ENCODE measurements at regions of chr1 and their contacts with region 1.

Region 1: GRCh38 chr1:245045087-245045881 is 109.5 kb upstream of the KIF26B start:
- DNase-seq: no peak
- ATAC-seq: peak; percentile 21; the same call in 2 of the 3 replicates
- H3K4me3 ChIP-seq: no peak overlapping the region
- H3K27ac ChIP-seq: no peak overlapping the region
- H3K4me1 ChIP-seq: no peaks in the 10 kb centered on the region
- H3K27me3 ChIP-seq: peaks cover 0 to 1% of the 10 kb centered on the region in 2 experiments; a peak in 1 of 4 replicates
- CTCF ChIP-seq: no peak
- EP300 ChIP-seq: no peak
- POLR2A ChIP-seq: no peak
- RAD21 ChIP-seq: no peak

Region 2: GRCh38 chr1:244599937-244600350 is 445.3 kb before region 1 on chr1:
- CTCF ChIA-PET with region 1: interaction called, 78 read pairs
- POLR2A ChIA-PET with region 1: no interaction called
- RAD21 ChIA-PET with region 1: interaction called, 37 read pairs
- SMC1A ChIA-PET with region 1: interaction called, 40 read pairs
- in situ Hi-C with region 1: loop called (anchors 5 kb)
- intact Hi-C with region 1: loop called (anchors 2 kb)
- DNase-seq: peak; percentile 40
- ATAC-seq: peak; percentile 94
- H3K4me3 ChIP-seq: no peak overlapping the region
- H3K27ac ChIP-seq: no peak overlapping the region
- H3K4me1 ChIP-seq: peaks cover 4% of the 10 kb centered on the region
- H3K27me3 ChIP-seq: peaks cover 2% of the 10 kb centered on the region in 2 experiments; a peak in 2 of 4 replicates
- CTCF ChIP-seq: no peak
- EP300 ChIP-seq: peak; percentile 60 to 61
- POLR2A ChIP-seq: no peak
- RAD21 ChIP-seq: no peak

Region 3: DNA sequence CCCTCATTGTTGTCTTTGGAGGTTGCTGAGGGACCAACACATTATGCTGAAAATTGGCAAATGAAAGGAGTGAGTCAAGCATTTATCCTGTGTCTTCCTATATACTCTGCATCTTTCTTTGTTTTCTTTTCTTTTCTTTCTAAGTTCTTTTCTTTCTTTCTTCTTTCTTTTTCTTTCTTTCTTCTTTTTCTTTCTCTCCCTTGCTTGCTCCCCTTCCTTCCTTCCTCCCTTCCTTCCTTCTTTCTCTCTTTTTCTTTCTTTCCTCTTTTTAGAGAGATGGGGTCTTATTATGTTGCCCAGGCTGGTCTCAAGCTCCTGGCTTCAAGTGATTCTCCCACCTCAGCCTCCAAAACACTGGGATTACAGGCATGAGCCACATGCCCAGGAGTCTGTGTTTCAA is 238.1 kb before region 1 on chr1:
- CTCF ChIA-PET with region 1: interaction called, 239 read pairs
- POLR2A ChIA-PET with region 1: no interaction called
- RAD21 ChIA-PET with region 1: interaction called, 109 read pairs
- SMC1A ChIA-PET with region 1: interaction called, 91 read pairs
- in situ Hi-C with region 1: loop called (anchors 5 kb)
- intact Hi-C with region 1: no loop called
- DNase-seq: no peak
- ATAC-seq: no peak
- H3K4me3 ChIP-seq: no peak overlapping the region
- H3K27ac ChIP-seq: no peak overlapping the region
- H3K4me1 ChIP-seq: no peaks in the 10 kb centered on the region
- H3K27me3 ChIP-seq: no peaks in the 10 kb centered on the region
- CTCF ChIP-seq: no peak
- EP300 ChIP-seq: no peak
- POLR2A ChIP-seq: no peak
- RAD21 ChIP-seq: no peak

Region 4: GRCh38 chr1:244843148-244843978 is 201.9 kb before region 1 on chr1:
- CTCF ChIA-PET with region 1: interaction called, 13 read pairs
- POLR2A ChIA-PET with region 1: no interaction called
- RAD21 ChIA-PET with region 1: interaction called, 7 read pairs
- SMC1A ChIA-PET with region 1: interaction called, 15 read pairs
- in situ Hi-C with region 1: no loop called
- intact Hi-C with region 1: no loop called
- DNase-seq: no peak
- ATAC-seq: no peak
- H3K4me3 ChIP-seq: no peak overlapping the region
- H3K27ac ChIP-seq: no peak overlapping the region
- H3K4me1 ChIP-seq: no peaks in the 10 kb centered on the region
- H3K27me3 ChIP-seq: no peaks in the 10 kb centered on the region
- CTCF ChIP-seq: no peak
- EP300 ChIP-seq: no peak
- POLR2A ChIP-seq: no peak
- RAD21 ChIP-seq: no peak

Region 5: DNA sequence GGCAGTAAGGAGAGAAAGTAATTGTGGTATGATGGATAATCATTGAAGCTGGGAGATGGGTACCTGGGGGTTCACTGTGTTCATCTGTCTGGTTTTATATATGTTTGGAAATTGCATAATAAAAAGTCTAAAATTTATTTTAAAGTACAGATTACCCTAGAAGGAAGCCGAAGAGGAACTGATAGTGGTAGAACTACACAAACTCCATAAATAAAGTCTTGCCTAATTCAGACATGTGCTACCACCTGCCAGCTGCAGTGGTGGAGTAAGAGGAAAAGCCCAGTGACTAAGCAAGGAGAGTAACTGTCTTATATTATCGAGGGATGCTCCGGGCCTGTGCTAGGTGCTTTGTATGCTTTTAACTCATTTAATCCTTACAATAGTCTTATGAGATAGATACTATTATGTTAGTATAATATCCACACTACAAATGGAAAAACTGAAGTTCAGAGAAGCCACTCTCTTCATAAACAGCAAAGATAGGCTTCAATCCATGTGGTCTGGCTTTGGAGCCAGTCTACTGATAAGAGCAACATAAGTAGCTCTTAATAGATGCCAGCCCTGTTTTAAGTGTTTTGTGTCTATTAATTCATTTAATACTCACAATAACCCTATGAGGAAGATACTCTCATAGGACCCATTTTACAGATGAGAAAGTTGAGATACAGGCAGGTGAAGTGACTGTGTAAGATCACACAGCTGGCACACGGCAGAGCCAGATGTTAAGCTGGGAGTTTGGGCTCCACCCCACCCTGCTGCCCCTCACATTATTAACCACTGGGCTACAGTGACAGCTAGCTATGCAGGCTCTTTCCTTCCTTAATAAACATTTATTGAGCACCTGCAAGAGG is 124.1 kb before region 1 on chr1:
- CTCF ChIA-PET with region 1: interaction called, 10 read pairs
- POLR2A ChIA-PET with region 1: no interaction called
- RAD21 ChIA-PET with region 1: interaction called, 8 read pairs
- SMC1A ChIA-PET with region 1: interaction called, 7 read pairs
- in situ Hi-C with region 1: no loop called
- intact Hi-C with region 1: no loop called
- DNase-seq: no peak
- ATAC-seq: peak; percentile 73
- H3K4me3 ChIP-seq: no peak overlapping the region
- H3K27ac ChIP-seq: peak overlapping the region; percentile 51
- H3K4me1 ChIP-seq: peaks cover 14% of the 10 kb centered on the region
- H3K27me3 ChIP-seq: no peaks in the 10 kb centered on the region
- CTCF ChIP-seq: no peak
- EP300 ChIP-seq: no peak
- POLR2A ChIP-seq: no peak
- RAD21 ChIP-seq: no peak

Region 6: GRCh38 chr1:244988521-244988920 is 56.8 kb before region 1 on chr1:
- CTCF ChIA-PET with region 1: interaction called, 15 read pairs
- POLR2A ChIA-PET with region 1: no interaction called
- RAD21 ChIA-PET with region 1: no interaction called
- SMC1A ChIA-PET with region 1: interaction called, 3 read pairs
- in situ Hi-C with region 1: no loop called
- intact Hi-C with region 1: no loop called
- DNase-seq: no peak
- ATAC-seq: no peak
- H3K4me3 ChIP-seq: no peak overlapping the region
- H3K27ac ChIP-seq: no peak overlapping the region
- H3K4me1 ChIP-seq: no peaks in the 10 kb centered on the region
- H3K27me3 ChIP-seq: no peaks in the 10 kb centered on the region
- CTCF ChIP-seq: no peak
- EP300 ChIP-seq: no peak
- POLR2A ChIP-seq: no peak
- RAD21 ChIP-seq: no peak

Region 7: DNA sequence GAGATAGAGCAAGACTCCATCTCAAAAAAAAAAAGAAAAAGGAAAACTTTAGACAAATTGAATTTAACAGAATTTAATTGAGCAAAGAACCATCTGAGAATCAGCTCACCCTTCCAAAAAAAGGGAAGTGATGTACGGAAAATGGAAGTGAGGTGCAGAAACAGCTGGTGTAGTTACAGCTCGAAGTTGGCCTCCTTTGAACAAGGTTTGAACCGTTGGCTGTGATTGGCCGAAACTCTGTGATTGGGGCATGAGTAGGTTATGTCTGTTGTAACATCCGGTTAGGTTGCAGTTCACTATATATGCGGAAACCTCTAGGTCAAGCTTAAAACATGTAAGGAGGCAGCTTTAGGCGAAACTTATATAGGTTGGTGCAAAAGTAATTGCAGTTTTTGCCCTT is 11.6 kb after region 1 on chr1:
- CTCF ChIA-PET with region 1: interaction called, 14 read pairs
- POLR2A ChIA-PET with region 1: interaction called, 4 read pairs
- RAD21 ChIA-PET with region 1: interaction called, 8 read pairs
- SMC1A ChIA-PET with region 1: interaction called, 8 read pairs
- in situ Hi-C with region 1: no loop called
- intact Hi-C with region 1: no loop called
- DNase-seq: no peak
- ATAC-seq: no peak
- H3K4me3 ChIP-seq: no peak overlapping the region
- H3K27ac ChIP-seq: no peak overlapping the region
- H3K4me1 ChIP-seq: no peaks in the 10 kb centered on the region; the same call in 1 of the 2 replicates
- H3K27me3 ChIP-seq: peaks cover 0 to 2% of the 10 kb centered on the region in 2 experiments; a peak in 1 of 4 replicates
- CTCF ChIP-seq: no peak
- EP300 ChIP-seq: no peak
- POLR2A ChIP-seq: no peak
- RAD21 ChIP-seq: no peak